Common myeloid progenitor, CD34-positive (primary cell): ENCODE measurements at regions of chr2 and their contacts with region 1.

Region 1: DNA sequence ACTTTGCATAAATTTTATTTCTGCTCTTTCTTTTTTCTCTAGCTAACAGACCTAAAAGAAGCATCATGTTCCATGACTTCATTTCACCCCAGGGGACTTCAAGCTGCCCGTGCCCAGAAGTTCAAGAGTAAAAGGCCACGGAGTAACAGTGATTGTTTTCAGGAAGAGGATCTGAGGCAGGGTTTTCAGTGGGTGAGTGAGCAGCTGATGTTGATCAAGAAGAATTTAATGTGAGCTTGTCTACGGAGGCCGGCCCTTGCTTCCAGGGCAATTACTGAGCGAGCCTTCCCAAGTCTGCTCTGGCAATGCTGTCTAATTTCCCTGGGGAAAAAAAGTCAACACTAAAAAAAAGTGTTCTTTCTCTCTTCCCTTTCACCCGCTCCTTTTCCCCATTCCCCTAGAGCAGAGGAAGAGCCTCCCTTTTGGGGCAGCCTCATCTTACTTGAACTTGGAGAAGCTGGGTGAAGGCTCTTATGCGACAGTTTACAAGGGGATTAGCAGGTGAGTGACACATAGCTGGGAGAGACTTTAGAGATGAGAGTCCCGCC is 1.2 kb downstream of the CDK15 start:
- DNase-seq: no peak
- H3K4me3 ChIP-seq: no peak overlapping the region
- H3K27ac ChIP-seq: no peak overlapping the region
- H3K4me1 ChIP-seq: no peaks in the 10 kb centered on the region
- H3K27me3 ChIP-seq: no peaks in the 10 kb centered on the region

Region 2: DNA sequence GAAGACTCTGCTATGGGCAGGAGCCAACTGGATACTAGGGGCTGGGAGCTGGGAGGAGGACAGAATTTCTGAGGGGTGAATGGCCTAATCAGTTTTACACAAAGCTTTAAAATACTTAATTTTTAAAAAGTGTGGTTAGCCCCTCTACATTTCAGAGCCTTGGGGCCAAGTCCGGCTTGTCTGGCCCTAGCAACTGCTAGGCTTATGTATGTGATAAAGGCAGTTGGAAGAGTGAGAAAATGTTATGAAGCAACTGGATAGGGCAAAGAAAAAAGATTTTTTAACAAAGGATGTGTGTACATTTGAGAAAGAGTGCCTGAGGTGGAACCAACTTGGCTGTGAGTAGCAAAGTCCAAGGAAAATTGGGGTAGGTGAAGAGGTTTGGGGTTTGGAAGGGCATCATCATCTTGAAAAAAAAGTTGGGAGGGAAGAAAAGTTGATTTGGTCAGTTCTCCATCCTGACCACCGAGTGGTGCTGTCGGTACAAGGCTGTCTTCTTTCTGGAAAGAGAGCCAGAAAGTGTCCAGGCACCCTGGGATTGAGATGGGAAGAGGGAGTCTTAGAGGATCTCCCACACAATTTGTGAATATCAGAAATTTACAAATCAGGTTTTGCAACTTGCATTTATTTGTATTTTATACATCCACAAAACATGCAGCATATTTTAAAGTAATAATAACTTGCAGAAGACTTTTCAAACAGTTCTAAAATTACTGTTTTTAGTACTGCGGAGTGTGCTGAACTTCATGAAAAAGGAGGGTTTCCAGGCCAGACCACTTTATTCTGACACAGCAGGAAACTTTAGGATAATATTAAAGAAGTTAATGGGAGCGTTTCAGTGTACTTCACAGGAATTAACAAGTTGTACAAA is 11.7 kb before region 1 on chr2:
- CTCF ChIA-PET with region 1: interaction called, 10 read pairs
- POLR2A ChIA-PET with region 1: no interaction called
- DNase-seq: peak; percentile 26 to 47 (median 43)
- H3K4me3 ChIP-seq: no peak overlapping the region
- H3K27ac ChIP-seq: no peak overlapping the region
- H3K4me1 ChIP-seq: peaks cover 3 to 11% (median 7%) of the 10 kb centered on the region in 4 experiments
- H3K27me3 ChIP-seq: no peaks in the 10 kb centered on the region

Region 3: DNA sequence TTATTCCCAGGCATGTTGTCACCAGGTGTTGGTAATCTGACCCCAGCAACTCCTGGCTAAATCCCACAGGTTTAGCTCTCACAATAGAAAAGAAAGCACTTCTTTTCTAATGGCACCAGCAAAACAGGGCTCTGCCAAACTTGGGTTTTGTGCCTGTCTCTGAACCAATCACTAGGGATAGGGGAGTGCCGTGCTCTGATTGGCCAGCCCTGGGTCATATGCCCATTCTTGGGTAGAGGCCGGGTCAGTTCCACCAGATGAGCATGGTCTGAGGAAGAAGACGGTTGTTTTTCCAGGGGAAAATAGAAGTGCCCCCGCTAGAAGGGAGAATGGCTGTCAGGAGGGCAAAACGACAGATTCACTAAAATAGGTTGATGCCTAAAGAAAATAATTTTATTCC is 13.6 kb after region 1 on chr2:
- CTCF ChIA-PET with region 1: no interaction called
- POLR2A ChIA-PET with region 1: no interaction called
- DNase-seq: no peak
- H3K4me3 ChIP-seq: no peak overlapping the region
- H3K27ac ChIP-seq: no peak overlapping the region
- H3K4me1 ChIP-seq: no peaks in the 10 kb centered on the region
- H3K27me3 ChIP-seq: no peaks in the 10 kb centered on the region